Thyroid gland (tissue), 4 donors: ENCODE measurements at regions of chr16 and their contacts with region 1.

Region 1: GRCh38 chr16:74709441-74709877 is 8.8 kb upstream of the MLKL start:
- DNase-seq: peak; percentile 74 to 88
- H3K4me3 ChIP-seq: no peak overlapping the region
- H3K27ac ChIP-seq: no peak overlapping the region
- H3K4me1 ChIP-seq: no peaks in the 10 kb centered on the region
- H3K27me3 ChIP-seq: no peaks in the 10 kb centered on the region
- CTCF ChIP-seq: peak; percentile 89 to 96 (median 92)
- POLR2A ChIP-seq: no peak

Region 2: GRCh38 chr16:74743668-74744299 is 34.3 kb after region 1 on chr16:
- intact Hi-C with region 1: no loop called
- DNase-seq: peak; percentile 95 to 96
- H3K4me3 ChIP-seq: peak overlapping the region in 1 of 3 donors; percentile 8
- H3K27ac ChIP-seq: peak overlapping the region; percentile 70 to 89 (median 79)
- H3K4me1 ChIP-seq: peaks cover 12 to 16% of the 10 kb centered on the region in 2 donors
- H3K27me3 ChIP-seq: no peaks in the 10 kb centered on the region
- CTCF ChIP-seq: no peak
- POLR2A ChIP-seq: peak in 1 of 2 donors; percentile 67

Region 3: GRCh38 chr16:74862741-74863244 is 153.3 kb after region 1 on chr16:
- intact Hi-C with region 1: loop called (anchors 5 kb)
- DNase-seq: no peak
- H3K4me3 ChIP-seq: no peak overlapping the region
- H3K27ac ChIP-seq: no peak overlapping the region
- H3K4me1 ChIP-seq: no peaks in the 10 kb centered on the region
- H3K27me3 ChIP-seq: no peaks in the 10 kb centered on the region
- CTCF ChIP-seq: peak; percentile 61 to 99 (median 88)
- POLR2A ChIP-seq: no peak

Region 4: DNA sequence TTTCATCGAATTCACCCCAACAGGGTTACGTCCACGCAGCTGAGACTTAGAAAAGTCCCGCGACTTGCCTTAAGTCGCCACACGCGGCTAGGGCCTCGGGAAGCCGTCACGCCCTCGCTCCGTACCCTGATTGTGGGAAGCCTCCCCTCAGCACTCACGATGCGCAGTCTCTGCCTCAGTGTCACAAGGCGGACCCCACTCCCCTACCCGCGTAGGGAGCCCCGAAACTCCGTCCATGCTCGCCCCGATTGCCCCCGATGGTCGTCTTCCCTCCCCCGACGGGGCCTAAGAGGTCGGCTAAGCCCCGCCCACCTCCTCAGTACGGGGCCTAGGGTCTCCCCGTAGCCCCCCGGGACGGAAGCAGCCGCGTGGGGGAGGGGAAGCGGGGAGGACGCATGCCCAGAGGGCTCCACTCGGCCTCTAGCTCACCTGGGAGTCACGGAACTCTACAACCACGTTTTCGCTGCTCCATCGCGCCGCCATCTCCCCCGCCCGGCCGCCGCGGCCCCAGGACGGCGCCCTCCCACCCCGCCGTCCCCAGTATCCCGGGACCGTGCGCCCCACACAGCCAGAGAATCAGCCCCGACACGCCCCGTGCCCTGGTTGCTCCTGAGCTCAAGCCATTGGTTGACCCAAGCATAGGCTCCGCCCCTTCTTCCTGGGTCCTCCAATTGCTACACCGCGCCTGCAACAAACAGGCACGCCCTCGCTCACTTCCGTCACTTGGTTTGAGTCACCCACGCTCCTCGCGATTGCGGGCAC is 275.3 kb after region 1 on chr16 and contains the start of gene WDR59:
- intact Hi-C with region 1: no loop called
- DNase-seq: peak; percentile 100
- H3K4me3 ChIP-seq: peak within 1 kb of the TSS; percentile 85 to 90 (median 88)
- H3K27ac ChIP-seq: peak within 1 kb of the TSS; percentile 20 to 80 (median 67)
- H3K4me1 ChIP-seq: peaks cover 14 to 19% of the 10 kb centered on the region in 2 donors
- H3K27me3 ChIP-seq: no peaks in the 10 kb centered on the region
- CTCF ChIP-seq: no peak
- POLR2A ChIP-seq: peak in 1 of 2 donors; percentile 69
- total RNA-seq, gene WDR59: 40.2 to 55.8 (median 46.9) TPM

Region 5: GRCh38 chr16:75110637-75111513 is 401.4 kb after region 1 on chr16:
- intact Hi-C with region 1: loop called (anchors 10 kb)
- DNase-seq: peak; percentile 93 to 95
- H3K4me3 ChIP-seq: no peak overlapping the region
- H3K27ac ChIP-seq: peak overlapping the region; percentile 82 to 93 (median 91)
- H3K4me1 ChIP-seq: peaks cover 54 to 71% of the 10 kb centered on the region in 2 donors
- H3K27me3 ChIP-seq: no peaks in the 10 kb centered on the region
- CTCF ChIP-seq: peak; percentile 81 to 97 (median 93)
- POLR2A ChIP-seq: peak in 1 of 2 donors; percentile 16